MCF 10A (cell line): ENCODE measurements at regions of chr5 and their contacts with region 1.

Region 1: GRCh38 chr5:154647114-154647760 is 107.9 kb upstream of the LARP1 start:
- DNase-seq: no peak
- H3K4me3 Mint-ChIP-seq: no peak overlapping the region
- H3K27ac Mint-ChIP-seq: no peak overlapping the region
- H3K4me1 Mint-ChIP-seq: no peaks in the 10 kb centered on the region
- H3K27me3 Mint-ChIP-seq: no peaks in the 10 kb centered on the region
- CTCF ChIP-seq: no peak

Region 2: GRCh38 chr5:154467655-154468354 is 179.4 kb before region 1 on chr5:
- CTCF ChIA-PET with region 1: interaction called, 13 read pairs
- POLR2A ChIA-PET with region 1: no interaction called
- intact Hi-C with region 1: no loop called
- DNase-seq: peak; percentile 83
- H3K4me3 Mint-ChIP-seq: no peak overlapping the region
- H3K27ac Mint-ChIP-seq: no peak overlapping the region
- H3K4me1 Mint-ChIP-seq: peaks cover 14% of the 10 kb centered on the region
- H3K27me3 Mint-ChIP-seq: peaks cover 24% of the 10 kb centered on the region
- CTCF ChIP-seq: peak; percentile 96

Region 3: GRCh38 chr5:154669402-154669801 is 22.2 kb after region 1 on chr5:
- CTCF ChIA-PET with region 1: interaction called, 14 read pairs
- POLR2A ChIA-PET with region 1: no interaction called
- intact Hi-C with region 1: no loop called
- DNase-seq: no peak
- H3K4me3 Mint-ChIP-seq: no peak overlapping the region
- H3K27ac Mint-ChIP-seq: no peak overlapping the region
- H3K4me1 Mint-ChIP-seq: no peaks in the 10 kb centered on the region
- H3K27me3 Mint-ChIP-seq: no peaks in the 10 kb centered on the region
- CTCF ChIP-seq: no peak

Region 4: GRCh38 chr5:154754460-154755360 is 107.5 kb after region 1 on chr5:
- CTCF ChIA-PET with region 1: interaction called, 7 read pairs
- POLR2A ChIA-PET with region 1: interaction called, 9 read pairs
- intact Hi-C with region 1: loop called (anchors 1 kb)
- DNase-seq: peak; percentile 100
- H3K4me3 Mint-ChIP-seq: peak overlapping the region; percentile 82
- H3K27ac Mint-ChIP-seq: peak overlapping the region; percentile 98
- H3K4me1 Mint-ChIP-seq: peaks cover 33% of the 10 kb centered on the region
- H3K27me3 Mint-ChIP-seq: no peaks in the 10 kb centered on the region
- CTCF ChIP-seq: peak; percentile 34

Region 5: GRCh38 chr5:154818471-154819116 is 171.4 kb after region 1 on chr5:
- CTCF ChIA-PET with region 1: interaction called, 18 read pairs
- POLR2A ChIA-PET with region 1: no interaction called
- intact Hi-C with region 1: no loop called
- DNase-seq: no peak
- H3K4me3 Mint-ChIP-seq: no peak overlapping the region
- H3K27ac Mint-ChIP-seq: peak overlapping the region; percentile 34
- H3K4me1 Mint-ChIP-seq: peaks cover 11% of the 10 kb centered on the region
- H3K27me3 Mint-ChIP-seq: no peaks in the 10 kb centered on the region
- CTCF ChIP-seq: no peak

Region 6: DNA sequence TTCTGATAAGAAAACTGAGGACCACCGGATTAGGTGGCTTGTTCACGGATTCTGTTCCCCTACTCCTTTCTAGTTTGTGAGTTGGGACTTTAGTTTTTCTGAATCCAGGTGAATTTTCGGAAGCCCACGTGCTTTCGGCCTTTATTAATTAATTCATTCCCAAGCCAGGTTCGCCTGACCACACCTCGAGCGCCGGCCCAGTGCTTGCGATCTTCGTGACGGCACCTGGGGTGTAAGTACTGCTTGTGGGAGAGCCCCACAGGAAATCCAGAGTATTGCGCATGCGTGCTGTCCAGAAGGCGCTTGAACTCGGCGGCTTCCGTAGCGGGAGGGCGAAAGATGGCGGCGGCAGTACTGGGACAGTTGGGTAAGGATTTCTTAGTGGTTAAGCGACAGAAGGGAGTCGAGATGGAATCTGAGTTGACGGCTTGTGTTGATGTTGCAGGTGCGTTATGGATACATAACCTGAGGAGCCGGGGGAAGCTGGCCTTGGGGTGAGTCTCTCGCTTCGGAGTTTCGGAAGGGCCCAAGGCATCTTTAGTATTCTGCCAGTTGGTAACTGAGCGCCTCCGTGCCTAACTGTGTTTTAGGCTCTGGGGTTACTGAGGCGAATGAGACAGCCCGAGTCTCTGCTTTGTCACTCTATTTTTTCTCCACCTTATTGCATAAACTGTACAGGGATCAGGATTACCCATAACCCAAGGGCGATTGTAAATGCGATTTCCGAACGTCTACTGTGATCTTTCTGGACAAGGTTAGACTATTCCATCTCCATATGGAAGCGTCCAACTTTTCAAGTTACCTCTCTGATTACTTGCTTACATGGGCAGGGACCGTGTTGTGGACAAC is 293.8 kb after region 1 on chr5 and contains the start of gene MRPL22:
- CTCF ChIA-PET with region 1: interaction called, 6 read pairs
- POLR2A ChIA-PET with region 1: no interaction called
- intact Hi-C with region 1: loop called (anchors 1 kb)
- DNase-seq: peak; percentile 97
- H3K4me3 Mint-ChIP-seq: peak within 1 kb of the TSS; percentile 96
- H3K27ac Mint-ChIP-seq: peak within 1 kb of the TSS; percentile 97
- H3K4me1 Mint-ChIP-seq: peaks cover 23% of the 10 kb centered on the region
- H3K27me3 Mint-ChIP-seq: no peaks in the 10 kb centered on the region
- CTCF ChIP-seq: no peak
- total RNA-seq, gene MRPL22: 123 and 127 TPM in 2 replicates

Region 7: DNA sequence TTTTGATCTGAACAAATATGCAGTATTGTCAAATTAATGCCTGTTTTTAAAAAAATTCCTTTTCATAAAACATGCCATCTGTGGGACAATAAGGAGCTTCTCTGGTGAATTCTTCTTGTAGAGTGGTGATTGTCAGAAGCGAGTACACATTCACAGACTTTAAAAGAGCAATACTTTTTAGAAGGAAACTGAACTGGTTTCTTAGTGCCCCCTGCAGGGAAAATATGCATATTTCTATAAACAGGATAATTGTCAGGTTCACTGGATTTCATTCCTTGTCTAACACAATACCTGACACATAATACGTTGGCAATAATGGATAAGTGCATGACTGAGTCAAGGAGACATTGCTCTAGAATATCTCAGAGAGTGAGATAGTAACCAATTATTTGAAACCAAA is 500.0 kb after region 1 on chr5:
- CTCF ChIA-PET with region 1: no interaction called
- POLR2A ChIA-PET with region 1: no interaction called
- intact Hi-C with region 1: loop called (anchors 10 kb)
- DNase-seq: peak; percentile 39
- H3K4me3 Mint-ChIP-seq: no peak overlapping the region
- H3K27ac Mint-ChIP-seq: no peak overlapping the region
- H3K4me1 Mint-ChIP-seq: no peaks in the 10 kb centered on the region
- H3K27me3 Mint-ChIP-seq: no peaks in the 10 kb centered on the region
- CTCF ChIP-seq: peak; percentile 49

Region 8: GRCh38 chr5:155181542-155181941 is 534.3 kb after region 1 on chr5:
- CTCF ChIA-PET with region 1: no interaction called
- POLR2A ChIA-PET with region 1: no interaction called
- intact Hi-C with region 1: no loop called
- DNase-seq: no peak
- H3K4me3 Mint-ChIP-seq: no peak overlapping the region
- H3K27ac Mint-ChIP-seq: no peak overlapping the region
- H3K4me1 Mint-ChIP-seq: no peaks in the 10 kb centered on the region
- H3K27me3 Mint-ChIP-seq: no peaks in the 10 kb centered on the region
- CTCF ChIP-seq: no peak